Left ventricle myocardium superior (tissue), 1 donor: ENCODE measurements at regions of chr3 and their contacts with region 1.

Region 1: DNA sequence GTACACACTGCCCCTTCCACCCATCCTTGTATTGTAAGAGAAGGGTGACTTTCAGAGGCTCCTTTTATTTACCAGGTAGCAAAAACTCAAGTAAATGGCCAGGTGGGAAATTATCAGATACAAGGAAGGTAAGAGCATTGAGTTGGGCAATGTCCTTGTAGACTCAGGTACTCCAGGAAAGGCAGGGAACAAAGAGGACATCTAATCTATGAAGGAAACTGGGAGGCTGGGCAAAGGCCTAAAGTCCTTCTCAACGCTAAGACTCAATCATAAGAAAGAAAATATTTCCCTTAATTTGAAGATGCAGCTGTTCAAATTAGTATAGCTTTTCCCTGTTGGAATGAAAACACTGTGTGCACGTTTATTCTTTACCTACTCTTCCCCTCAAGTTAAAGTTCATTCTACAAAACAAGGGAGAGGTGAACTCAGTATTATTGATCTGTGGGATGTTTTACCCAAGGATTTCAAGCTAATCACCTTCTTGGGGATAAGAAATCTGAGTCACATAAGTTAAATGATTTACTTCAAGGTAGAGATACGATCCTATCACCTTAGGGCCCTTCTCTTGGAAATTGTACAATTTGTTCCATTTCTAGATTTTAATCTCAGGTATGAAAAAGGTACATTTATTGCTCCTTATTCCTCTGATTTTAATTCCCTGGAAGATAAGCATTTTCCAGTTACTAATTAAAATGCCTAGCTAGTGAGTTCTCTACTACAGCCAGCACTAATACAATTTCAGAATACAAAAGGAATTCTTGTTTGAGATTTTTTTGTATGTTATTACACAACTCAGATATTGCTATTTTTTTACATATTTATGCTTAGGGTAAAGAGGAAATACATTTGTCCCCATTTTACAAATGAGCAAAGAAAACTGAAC is 80.6 kb downstream of the PLD1 start:
- DNase-seq: no peak
- ATAC-seq: no peak

Region 2: GRCh38 chr3:171660188-171660587 is 69.5 kb before region 1 on chr3:
- intact Hi-C with region 1: loop called (anchors 10 kb)
- DNase-seq: no peak
- ATAC-seq: peak; percentile 39

Region 3: GRCh38 chr3:171748064-171748918 is 18.6 kb after region 1 on chr3:
- intact Hi-C with region 1: no loop called
- DNase-seq: no peak
- ATAC-seq: peak; percentile 76

Region 4: DNA sequence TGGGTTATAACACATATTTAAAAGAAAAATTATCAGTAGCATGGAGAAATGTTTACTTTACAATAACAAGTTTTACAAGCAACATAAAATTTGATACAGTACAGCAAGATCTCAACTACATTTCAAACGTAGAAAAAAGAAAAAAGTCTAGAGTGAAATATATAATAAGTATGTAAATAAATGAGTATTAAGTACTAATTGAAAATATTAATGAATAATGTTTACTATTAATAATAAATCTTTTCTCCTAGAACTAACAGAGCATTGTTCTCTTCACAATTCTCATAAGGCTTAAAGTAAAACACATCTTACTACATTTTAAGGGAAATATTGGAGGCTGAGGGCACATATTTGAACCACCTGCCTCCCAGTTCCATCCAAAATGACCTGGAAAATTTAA is 185.6 kb after region 1 on chr3:
- intact Hi-C with region 1: no loop called
- DNase-seq: no peak
- ATAC-seq: no peak